Common myeloid progenitor, CD34-positive (primary cell): ENCODE measurements at regions of chr11 and their contacts with region 1.

Region 1: GRCh38 chr11:34006876-34007275 is 44.7 kb upstream of the CAPRIN1 start:
- DNase-seq: no peak
- H3K4me3 ChIP-seq: no peak overlapping the region
- H3K27ac ChIP-seq: no peak overlapping the region
- H3K4me1 ChIP-seq: no peaks in the 10 kb centered on the region
- H3K27me3 ChIP-seq: no peaks in the 10 kb centered on the region

Region 2: DNA sequence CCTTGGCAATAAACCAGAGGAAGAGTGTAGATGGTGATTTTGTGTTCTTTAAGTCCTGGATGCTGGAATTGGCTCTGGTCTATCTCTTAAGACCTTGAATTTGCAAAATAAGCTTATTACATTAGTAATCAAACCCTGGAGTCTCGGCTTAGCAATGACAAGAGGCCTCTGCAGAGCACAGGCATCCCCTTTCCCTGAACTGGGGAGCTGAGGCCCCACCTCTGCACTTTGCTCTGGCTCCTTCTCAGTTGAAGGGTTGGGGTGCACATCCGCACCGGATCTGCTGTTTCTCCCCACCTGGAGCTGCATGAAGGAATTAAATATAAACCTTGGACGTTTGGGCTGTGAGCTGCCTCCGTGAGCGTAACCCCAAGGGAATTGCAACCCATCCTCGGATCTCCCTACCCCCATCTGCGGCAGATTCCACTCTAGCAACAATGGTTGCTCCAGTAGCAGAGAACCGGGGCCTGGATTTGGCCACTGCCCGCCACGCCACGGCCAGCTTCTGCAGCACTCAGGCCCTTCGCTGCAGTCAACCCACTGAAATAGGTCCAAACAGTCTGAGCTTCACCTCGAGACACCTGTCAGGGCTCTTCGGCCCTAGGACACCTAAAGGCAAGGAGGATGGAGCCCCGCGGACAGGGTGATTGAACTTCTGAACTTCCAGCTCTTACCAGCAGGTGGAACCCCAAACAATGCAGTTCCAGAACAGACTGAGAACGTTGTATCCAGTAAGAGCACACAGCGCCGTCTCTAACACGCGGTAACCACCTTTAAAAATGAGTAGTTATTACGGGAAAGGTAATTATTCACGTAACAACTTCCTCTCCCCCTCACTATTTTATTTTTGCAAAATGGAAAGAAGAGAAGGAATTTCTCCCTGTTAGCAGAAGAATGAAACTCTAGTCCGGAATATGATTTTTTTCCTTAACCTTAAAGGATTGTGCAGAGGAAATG is 10.1 kb before region 1 on chr11:
- CTCF ChIA-PET with region 1: interaction called, 26 read pairs
- POLR2A ChIA-PET with region 1: interaction called, 4 read pairs
- DNase-seq: peak; percentile 72 to 85 (median 81)
- H3K4me3 ChIP-seq: peak overlapping the region in 4 of 7 experiments; percentile 5 to 54 (median 32)
- H3K27ac ChIP-seq: no peak overlapping the region
- H3K4me1 ChIP-seq: peaks cover 0 to 8% (median 7%) of the 10 kb centered on the region in 4 experiments
- H3K27me3 ChIP-seq: peaks cover 0 to 8% (median 4%) of the 10 kb centered on the region in 5 experiments